Activated CD4-positive, alpha-beta memory T cell treated with anti-CD3 and anti-CD28 coated beads for 36 hours (primary cell): ENCODE measurements at regions of chr9 and their contacts with region 1.

Region 1: GRCh38 chr9:135478858-135479468 is 619 bp upstream of the PPP1R26 start:
- DNase-seq: peak; percentile 19
- H3K4me3 Mint-ChIP-seq: peak overlapping the region; percentile 79
- H3K27ac Mint-ChIP-seq: no peak overlapping the region
- H3K4me1 Mint-ChIP-seq: peaks cover 9% of the 10 kb centered on the region
- H3K27me3 Mint-ChIP-seq: peaks cover 40% of the 10 kb centered on the region

Region 2: GRCh38 chr9:135439916-135440315 is 39.0 kb before region 1 on chr9:
- CTCF ChIA-PET with region 1: no interaction called
- POLR2A ChIA-PET with region 1: no interaction called
- intact Hi-C with region 1: loop called (anchors 5 kb)
- DNase-seq: no peak
- H3K4me3 Mint-ChIP-seq: no peak overlapping the region
- H3K27ac Mint-ChIP-seq: no peak overlapping the region
- H3K4me1 Mint-ChIP-seq: no peaks in the 10 kb centered on the region
- H3K27me3 Mint-ChIP-seq: peaks cover 18% of the 10 kb centered on the region

Region 3: DNA sequence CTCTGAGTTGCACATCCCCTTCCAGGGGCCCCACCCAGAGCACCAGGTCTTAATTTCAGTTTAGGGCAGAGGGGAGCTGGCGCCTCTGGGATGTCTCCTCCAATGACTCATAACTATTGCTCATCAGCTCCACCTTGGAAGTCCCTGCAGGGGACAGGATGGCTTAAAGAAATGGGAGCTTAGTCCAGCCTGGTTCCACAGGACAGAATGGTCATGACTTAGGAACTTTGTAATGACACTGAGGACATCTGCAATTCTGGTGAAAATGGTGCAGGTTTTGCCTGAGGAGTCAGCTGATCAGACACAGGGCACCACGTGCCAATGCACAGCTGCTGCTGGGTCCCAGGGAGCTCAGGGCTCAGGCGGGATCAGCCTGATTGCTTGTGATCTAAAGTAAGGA is 15.8 kb before region 1 on chr9:
- CTCF ChIA-PET with region 1: no interaction called
- POLR2A ChIA-PET with region 1: no interaction called
- intact Hi-C with region 1: no loop called
- DNase-seq: no peak
- H3K4me3 Mint-ChIP-seq: no peak overlapping the region
- H3K27ac Mint-ChIP-seq: no peak overlapping the region
- H3K4me1 Mint-ChIP-seq: peaks cover 2% of the 10 kb centered on the region
- H3K27me3 Mint-ChIP-seq: peaks cover 20% of the 10 kb centered on the region